ENCODE measurements at regions of chr19 and their contacts with region 1.

Region 1: GRCh38 chr19:9621156-9622037 is at the start of gene ZNF561:
- DNase-seq: peak; percentile 85
- CTCF ChIP-seq: no peak

Region 2: GRCh38 chr19:9636018-9636417 is 14.6 kb after region 1 on chr19:
- CTCF ChIA-PET with region 1: interaction called, 15 read pairs
- POLR2A ChIA-PET with region 1: no interaction called
- DNase-seq: no peak
- CTCF ChIP-seq: no peak

Region 3: GRCh38 chr19:9690746-9691145 is 69.3 kb after region 1 on chr19:
- CTCF ChIA-PET with region 1: no interaction called
- POLR2A ChIA-PET with region 1: no interaction called
- DNase-seq: no peak
- CTCF ChIP-seq: no peak

Measured in GM10248 (cell line).